CD14-positive monocyte (primary cell): ENCODE measurements at regions of chr19 and their contacts with region 1.

Region 1: DNA sequence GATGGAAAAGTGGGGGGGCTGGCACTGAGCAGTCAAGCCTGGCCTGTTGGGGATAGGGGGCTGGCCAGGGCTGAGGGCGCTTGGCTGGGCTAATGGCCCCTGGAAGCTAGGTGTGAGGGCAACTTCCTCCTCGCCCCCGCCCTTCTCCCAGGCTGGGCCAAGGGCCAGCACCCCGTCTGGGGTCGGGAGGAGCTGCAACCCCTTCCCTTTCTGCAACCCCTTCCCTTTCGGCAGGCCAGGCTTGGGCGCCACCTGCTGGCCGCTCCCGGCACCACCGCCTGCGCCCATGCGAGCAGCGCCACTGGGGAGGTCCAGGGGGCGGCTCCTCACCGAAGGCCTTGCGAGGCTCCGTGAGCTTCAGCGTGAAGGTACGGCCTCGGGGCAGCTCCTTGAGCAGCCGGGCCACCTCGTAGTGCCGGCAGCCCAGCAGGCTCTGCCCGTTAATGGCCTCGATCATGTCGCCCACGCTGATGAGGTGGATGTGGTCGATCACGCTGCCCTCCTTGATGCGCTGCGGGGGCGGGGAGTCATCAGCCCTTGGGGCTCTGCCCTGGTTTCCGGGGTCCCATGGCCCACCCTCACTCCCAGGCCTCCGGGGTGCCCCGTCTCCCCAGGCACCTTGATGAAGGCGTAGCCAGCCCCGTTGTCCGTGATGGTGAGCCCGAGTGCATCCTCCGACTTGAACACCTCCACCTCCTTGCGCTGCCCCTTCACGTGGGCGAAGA is 5.0 kb upstream of the PTGER1 start:
- DNase-seq: peak in 2 of 3 donors; percentile 50 to 58
- H3K4me3 ChIP-seq: no peak overlapping the region
- H3K4me3 Mint-ChIP-seq: no peak overlapping the region
- H3K27ac ChIP-seq: no peak overlapping the region
- H3K27ac Mint-ChIP-seq: no peak overlapping the region
- H3K4me1 ChIP-seq: peaks cover 31 to 33% of the 10 kb centered on the region in 2 donors
- H3K4me1 Mint-ChIP-seq: peaks cover 18% of the 10 kb centered on the region
- H3K27me3 ChIP-seq: peaks cover 0 to 20% of the 10 kb centered on the region in 2 donors
- H3K27me3 Mint-ChIP-seq: peaks cover 14 to 38% (median 21%) of the 10 kb centered on the region in 3 donors
- CTCF ChIP-seq: peak; percentile 99

Region 2: GRCh38 chr19:13872695-13873389 is 607.3 kb before region 1 on chr19:
- intact Hi-C with region 1: loop called in 1 of 2 experiments (anchors 10 kb)
- DNase-seq: peak in 1 of 3 donors; percentile 20
- H3K4me3 ChIP-seq: peak overlapping the region; percentile 12 to 68 (median 32)
- H3K4me3 Mint-ChIP-seq: peak overlapping the region; percentile 74 to 89
- H3K27ac ChIP-seq: no peak overlapping the region
- H3K27ac Mint-ChIP-seq: peak overlapping the region in 3 of 7 donors; percentile 32 to 64 (median 41)
- H3K4me1 ChIP-seq: peaks cover 10 to 11% of the 10 kb centered on the region in 2 donors
- H3K4me1 Mint-ChIP-seq: peaks cover 9% of the 10 kb centered on the region
- H3K27me3 ChIP-seq: peaks cover 0 to 9% of the 10 kb centered on the region in 2 donors
- H3K27me3 Mint-ChIP-seq: peaks cover 14 to 39% (median 14%) of the 10 kb centered on the region in 3 donors
- CTCF ChIP-seq: no peak

Region 3: GRCh38 chr19:14432791-14433553 is 47.2 kb before region 1 on chr19 and contains the start of gene PKN1:
- intact Hi-C with region 1: loop called in 1 of 2 experiments (anchors 5 kb)
- DNase-seq: no peak
- H3K4me3 ChIP-seq: peak within 1 kb of the TSS; percentile 57 to 93 (median 89)
- H3K4me3 Mint-ChIP-seq: peak within 1 kb of the TSS; percentile 79 to 87
- H3K27ac ChIP-seq: peak within 1 kb of the TSS in 1 of 2 donors; percentile 62
- H3K27ac Mint-ChIP-seq: peak within 1 kb of the TSS; percentile 42 to 86 (median 79)
- H3K4me1 ChIP-seq: peaks cover 40 to 48% of the 10 kb centered on the region in 2 donors
- H3K4me1 Mint-ChIP-seq: peaks cover 38% of the 10 kb centered on the region
- H3K27me3 ChIP-seq: peaks cover 0 to 2% of the 10 kb centered on the region in 2 donors
- H3K27me3 Mint-ChIP-seq: peaks cover 8 to 16% (median 9%) of the 10 kb centered on the region in 3 donors
- CTCF ChIP-seq: no peak
- polyA plus RNA-seq, gene PKN1: 49.5 to 119 (median 49.6) TPM